HCT116 (cell line): ENCODE measurements at regions of chr14 and their contacts with region 1.

Region 1: GRCh38 chr14:41201721-41202120 is 405.0 kb upstream of the LRFN5 start:
- DNase-seq: no peak
- ATAC-seq: no peak
- H3K4me3 ChIP-seq: no peak overlapping the region
- H3K27ac ChIP-seq: no peak overlapping the region
- H3K4me1 ChIP-seq: no peaks in the 10 kb centered on the region
- H3K27me3 ChIP-seq: no peaks in the 10 kb centered on the region
- CTCF ChIP-seq: no peak
- POLR2A ChIP-seq: no peak
- RAD21 ChIP-seq: no peak

Region 2: DNA sequence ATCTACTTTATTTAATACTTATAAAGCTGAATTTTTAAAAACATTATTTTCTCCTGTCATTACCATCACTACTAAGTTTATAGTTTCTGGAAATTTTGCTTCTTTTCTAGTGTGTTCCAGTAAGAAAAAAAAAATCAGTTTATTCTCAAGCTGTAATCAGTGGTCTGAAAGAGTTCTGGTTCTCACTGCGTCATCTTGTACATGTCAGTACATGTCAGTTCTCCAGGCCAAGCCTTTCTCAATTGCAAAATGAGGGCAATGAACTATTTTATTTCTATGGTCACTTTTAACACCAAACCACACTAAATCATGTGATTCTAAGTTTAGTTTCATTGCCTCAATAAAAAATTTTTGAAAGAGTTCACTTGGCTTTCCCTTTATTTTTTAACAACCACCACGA is 64.0 kb before region 1 on chr14:
- CTCF ChIA-PET with region 1: no interaction called
- POLR2A ChIA-PET with region 1: no interaction called
- RAD21 ChIA-PET with region 1: no interaction called
- intact Hi-C with region 1: loop called (anchors 1 kb)
- DNase-seq: no peak
- ATAC-seq: no peak
- H3K4me3 ChIP-seq: no peak overlapping the region
- H3K27ac ChIP-seq: no peak overlapping the region
- H3K4me1 ChIP-seq: no peaks in the 10 kb centered on the region
- H3K27me3 ChIP-seq: no peaks in the 10 kb centered on the region
- CTCF ChIP-seq: no peak
- POLR2A ChIP-seq: no peak
- RAD21 ChIP-seq: no peak